ENCODE measurements at regions of chr12 and their contacts with region 1.

Region 1: DNA sequence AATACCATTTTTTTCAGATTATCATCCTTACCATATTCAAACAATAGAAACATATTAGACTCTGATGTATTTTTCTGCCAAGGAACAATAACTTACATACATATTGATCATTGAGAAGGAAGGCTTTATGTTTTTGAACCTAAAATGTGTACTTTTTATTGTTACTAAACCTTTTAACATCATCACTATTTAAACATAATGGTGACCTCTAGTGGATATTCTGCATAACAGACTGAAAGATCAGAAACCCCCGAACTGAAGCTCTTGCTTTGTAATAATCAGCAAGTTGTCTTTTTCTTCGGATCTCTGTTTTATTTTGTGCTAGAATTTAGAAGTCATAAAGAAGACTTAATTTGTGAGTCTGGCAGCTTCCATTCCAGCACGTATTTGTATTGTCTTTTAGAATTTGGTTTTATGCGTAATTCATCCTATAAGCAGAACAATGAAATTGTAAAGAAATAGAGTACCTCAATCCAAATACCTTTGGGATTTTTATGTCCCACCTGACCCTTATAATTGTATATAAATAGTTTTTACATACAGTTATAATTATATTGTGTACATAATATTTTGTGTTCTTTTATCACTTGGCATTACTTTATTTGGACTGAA is 125.9 kb upstream of the ATF1 start:
- DNase-seq: no peak
- ATAC-seq: peak; percentile 57
- H3K4me3 ChIP-seq: no peak overlapping the region
- H3K4me1 ChIP-seq: peaks cover 9% of the 10 kb centered on the region
- CTCF ChIP-seq: peak; percentile 30

Region 2: DNA sequence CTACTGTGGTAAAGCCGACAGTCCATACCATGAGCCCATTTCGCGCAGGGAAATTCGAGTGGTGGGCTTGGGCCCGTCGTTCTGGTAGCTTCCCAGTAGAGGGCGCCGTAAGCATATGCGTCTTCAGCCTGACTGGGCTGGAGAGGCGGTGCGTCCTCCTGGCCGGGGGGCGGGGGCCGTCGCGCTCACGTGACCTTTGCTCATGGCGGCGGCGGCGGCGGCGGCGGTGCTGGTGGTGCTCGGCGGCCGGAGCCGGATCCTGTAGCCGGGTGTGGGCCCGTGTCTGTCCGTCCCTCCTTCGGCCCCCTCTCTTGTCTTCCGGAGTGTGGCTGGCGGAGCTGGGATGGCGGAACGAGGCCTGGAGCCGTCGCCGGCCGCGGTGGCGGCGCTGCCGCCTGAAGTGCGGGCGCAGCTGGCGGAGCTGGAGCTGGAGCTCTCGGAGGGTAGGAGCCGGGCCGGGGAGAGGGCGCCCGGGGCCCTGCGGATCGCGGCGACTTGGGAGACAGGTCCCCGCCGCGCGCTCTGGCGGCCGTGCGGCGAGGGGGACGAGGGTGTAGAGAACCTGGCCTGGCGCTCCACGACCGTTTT is 133.1 kb before region 1 on chr12 and contains the start of gene DIP2B:
- intact Hi-C with region 1: loop called (anchors 5 kb)
- DNase-seq: peak; percentile 97
- ATAC-seq: peak; percentile 95
- H3K4me3 ChIP-seq: peak within 1 kb of the TSS; percentile 90
- H3K4me1 ChIP-seq: peaks cover 32% of the 10 kb centered on the region
- CTCF ChIP-seq: peak; percentile 88
- total RNA-seq, gene DIP2B: 28.3 to 39.8 (median 34.7) TPM

Region 3: DNA sequence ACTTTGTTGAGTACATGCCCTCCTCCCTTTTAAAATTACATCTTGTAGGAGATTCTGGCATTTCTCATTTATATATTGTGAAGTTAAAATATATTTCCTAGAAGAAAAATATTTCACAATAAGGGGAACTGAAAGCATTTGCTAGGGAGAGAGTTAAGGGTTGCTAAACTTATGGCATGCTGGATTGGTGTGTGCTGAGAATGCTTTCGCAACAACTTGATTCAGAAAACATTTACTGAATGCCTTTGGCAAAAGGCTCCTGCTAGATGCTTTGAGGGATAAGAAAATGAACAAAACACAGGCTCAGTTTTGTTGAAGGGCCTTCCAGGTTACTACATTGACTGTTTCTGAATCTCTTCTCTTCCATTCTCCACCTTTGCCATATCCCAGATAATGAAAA is 65.7 kb before region 1 on chr12:
- intact Hi-C with region 1: no loop called
- DNase-seq: no peak
- ATAC-seq: peak; percentile 43
- H3K4me3 ChIP-seq: no peak overlapping the region
- H3K4me1 ChIP-seq: peaks cover 34% of the 10 kb centered on the region
- CTCF ChIP-seq: no peak

Region 4: DNA sequence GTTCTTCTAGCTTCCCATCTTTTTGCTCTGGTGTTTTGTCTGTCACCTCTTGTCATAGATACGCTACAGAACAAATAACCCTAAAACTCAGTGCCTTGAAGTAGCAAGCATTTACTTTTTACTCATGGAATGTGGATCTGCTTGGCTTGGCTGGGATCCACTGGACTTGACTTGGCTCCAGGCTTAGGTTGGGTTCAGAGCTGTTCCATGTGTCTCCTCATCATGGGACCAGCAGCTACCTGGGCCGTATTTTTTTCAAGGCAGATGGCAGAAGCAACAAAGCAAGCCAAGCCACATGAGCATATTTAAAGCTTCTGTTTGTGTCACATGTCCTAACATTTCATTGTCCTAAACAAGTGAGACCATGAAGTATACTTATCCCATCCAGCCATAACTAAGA is 77.2 kb after region 1 on chr12:
- intact Hi-C with region 1: no loop called
- DNase-seq: no peak
- ATAC-seq: no peak
- H3K4me3 ChIP-seq: no peak overlapping the region
- H3K4me1 ChIP-seq: no peaks in the 10 kb centered on the region
- CTCF ChIP-seq: no peak